Activated CD4-positive, alpha-beta memory T cell treated with anti-CD3 and anti-CD28 coated beads, Interleukin-2, amount 10 ng/mL, durations not matched to agents 7 days and 5 days (primary cell): ENCODE measurements at regions of chr13 and their contacts with region 1.

Region 1: GRCh38 chr13:99269627-99270241 is 11.6 kb upstream of the GPR18 start:
- DNase-seq: peak; percentile 34
- H3K4me3 Mint-ChIP-seq: no peak overlapping the region
- H3K27ac Mint-ChIP-seq: no peak overlapping the region
- H3K4me1 Mint-ChIP-seq: peaks cover 58% of the 10 kb centered on the region
- H3K27me3 Mint-ChIP-seq: no peaks in the 10 kb centered on the region

Region 2: GRCh38 chr13:99258210-99258860 is 11.4 kb before region 1 on chr13 and contains the start of gene GPR18:
- CTCF ChIA-PET with region 1: interaction called, 18 read pairs
- POLR2A ChIA-PET with region 1: interaction called, 5 read pairs
- DNase-seq: peak; percentile 48
- H3K4me3 Mint-ChIP-seq: peak within 1 kb of the TSS; percentile 78
- H3K27ac Mint-ChIP-seq: peak within 1 kb of the TSS; percentile 91
- H3K4me1 Mint-ChIP-seq: peaks cover 54% of the 10 kb centered on the region
- H3K27me3 Mint-ChIP-seq: no peaks in the 10 kb centered on the region
- total RNA-seq, gene GPR18: 10.3 to 10.4 TPM

Region 3: GRCh38 chr13:99307648-99308339 is 38.1 kb after region 1 on chr13:
- CTCF ChIA-PET with region 1: interaction called, 19 read pairs
- POLR2A ChIA-PET with region 1: interaction called, 393 read pairs
- DNase-seq: peak; percentile 78
- H3K4me3 Mint-ChIP-seq: peak overlapping the region; percentile 79
- H3K27ac Mint-ChIP-seq: peak overlapping the region; percentile 83
- H3K4me1 Mint-ChIP-seq: peaks cover 82% of the 10 kb centered on the region
- H3K27me3 Mint-ChIP-seq: no peaks in the 10 kb centered on the region

Region 4: GRCh38 chr13:99356158-99357091 is 86.7 kb after region 1 on chr13:
- CTCF ChIA-PET with region 1: interaction called, 24 read pairs
- POLR2A ChIA-PET with region 1: interaction called, 9 read pairs
- DNase-seq: peak; percentile 67
- H3K4me3 Mint-ChIP-seq: peak overlapping the region; percentile 56
- H3K27ac Mint-ChIP-seq: peak overlapping the region; percentile 96
- H3K4me1 Mint-ChIP-seq: peaks cover 99% of the 10 kb centered on the region
- H3K27me3 Mint-ChIP-seq: no peaks in the 10 kb centered on the region

Region 5: DNA sequence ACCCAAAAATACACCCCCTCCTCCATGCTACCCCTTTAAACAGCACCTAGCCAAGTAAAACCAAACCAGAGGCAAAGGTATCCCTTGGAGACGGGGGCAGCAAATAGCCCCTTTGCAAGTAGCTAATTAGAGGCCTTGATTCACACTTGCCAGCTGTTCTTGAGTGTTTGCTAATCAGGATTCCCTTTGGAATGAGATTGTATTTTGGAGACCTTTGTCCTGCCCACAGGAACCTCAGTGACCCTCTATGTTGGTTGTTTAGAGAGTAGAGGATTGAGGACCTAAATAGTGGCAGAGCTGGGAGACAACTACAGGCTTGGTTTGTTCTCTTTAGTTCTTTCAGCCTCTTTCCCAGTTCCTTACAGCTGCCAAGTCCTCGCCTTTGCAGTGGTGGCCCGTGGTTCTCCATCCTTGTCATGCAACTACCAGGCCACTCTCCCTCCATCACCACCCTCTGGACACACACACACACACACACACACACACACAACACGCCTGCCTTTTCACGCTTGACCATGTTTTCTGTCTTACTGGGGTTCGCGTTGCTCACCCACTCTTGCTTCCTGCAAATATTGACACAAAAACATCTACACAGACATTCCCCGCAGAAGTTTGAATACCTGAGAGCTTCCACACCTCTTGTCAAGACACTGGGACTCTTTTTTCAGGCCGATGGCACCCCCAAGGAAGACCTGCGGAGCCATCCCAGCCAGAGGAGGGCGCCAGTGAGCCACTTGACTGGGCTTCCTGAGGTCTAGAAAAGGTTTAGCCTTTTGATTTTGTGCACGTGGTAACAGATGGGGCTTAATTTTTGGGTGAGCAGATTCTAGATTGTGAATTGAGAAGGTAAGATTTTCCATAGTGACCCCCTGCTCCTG is 117.4 kb after region 1 on chr13:
- CTCF ChIA-PET with region 1: interaction called, 121 read pairs
- POLR2A ChIA-PET with region 1: interaction called, 23 read pairs
- DNase-seq: peak; percentile 81
- H3K4me3 Mint-ChIP-seq: no peak overlapping the region
- H3K27ac Mint-ChIP-seq: no peak overlapping the region
- H3K4me1 Mint-ChIP-seq: peaks cover 52% of the 10 kb centered on the region
- H3K27me3 Mint-ChIP-seq: no peaks in the 10 kb centered on the region